Spleen (tissue), 13 donors: ENCODE measurements at regions of chr14 and their contacts with region 1.

Region 1: GRCh38 chr14:38197001-38197783 is 10.5 kb upstream of the SSTR1 start:
- DNase-seq: no peak
- H3K4me3 ChIP-seq: no peak overlapping the region
- H3K27ac ChIP-seq: no peak overlapping the region
- H3K4me1 ChIP-seq: no peaks in the 10 kb centered on the region
- H3K27me3 ChIP-seq: no peaks in the 10 kb centered on the region
- CTCF ChIP-seq: peak in 9 of 11 experiments; percentile 10 to 66 (median 48)
- POLR2A ChIP-seq: no peak

Region 2: GRCh38 chr14:37985826-37986470 is 211.2 kb before region 1 on chr14:
- intact Hi-C with region 1: loop called (anchors 5 kb)
- DNase-seq: no peak
- H3K4me3 ChIP-seq: no peak overlapping the region
- H3K27ac ChIP-seq: no peak overlapping the region
- H3K4me1 ChIP-seq: no peaks in the 10 kb centered on the region
- H3K27me3 ChIP-seq: no peaks in the 10 kb centered on the region
- CTCF ChIP-seq: peak; percentile 27 to 81 (median 61)
- POLR2A ChIP-seq: no peak